ENCODE measurements at regions of chr4 and their contacts with region 1.

Region 1: GRCh38 chr4:152640058-152640833 is 39.6 kb downstream of the TMEM154 start:
- DNase-seq: no peak
- CTCF ChIP-seq: peak; percentile 40

Region 2: DNA sequence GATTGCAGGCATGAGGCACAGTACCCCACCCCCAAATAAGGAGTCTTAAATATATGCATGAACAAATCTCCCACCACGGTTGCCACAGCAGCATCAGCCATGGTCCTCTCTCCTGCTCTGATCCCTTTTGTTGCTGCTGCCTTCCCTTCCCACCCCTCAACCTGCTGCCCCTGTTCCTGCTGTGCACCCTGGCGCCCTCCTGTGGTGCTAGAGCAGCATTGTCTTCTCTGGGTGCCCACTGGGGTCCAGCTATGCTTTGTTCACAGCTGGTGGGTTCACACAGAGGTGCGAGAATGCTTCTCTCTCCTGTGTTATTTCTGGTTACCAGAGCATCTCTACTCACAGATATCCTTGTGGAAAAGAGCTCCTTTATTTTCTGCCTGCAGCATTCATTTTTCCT is 995.6 kb before region 1 on chr4:
- CTCF ChIA-PET with region 1: no interaction called
- POLR2A ChIA-PET with region 1: no interaction called
- DNase-seq: no peak
- CTCF ChIP-seq: no peak

Region 3: GRCh38 chr4:152454398-152455011 is 185.7 kb before region 1 on chr4:
- CTCF ChIA-PET with region 1: interaction called, 13 read pairs
- POLR2A ChIA-PET with region 1: no interaction called
- DNase-seq: peak; percentile 23
- CTCF ChIP-seq: peak; percentile 37

Region 4: GRCh38 chr4:152525873-152526272 is 114.4 kb before region 1 on chr4:
- CTCF ChIA-PET with region 1: interaction called, 13 read pairs
- POLR2A ChIA-PET with region 1: interaction called, 3 read pairs
- DNase-seq: no peak
- CTCF ChIP-seq: no peak

Region 5: DNA sequence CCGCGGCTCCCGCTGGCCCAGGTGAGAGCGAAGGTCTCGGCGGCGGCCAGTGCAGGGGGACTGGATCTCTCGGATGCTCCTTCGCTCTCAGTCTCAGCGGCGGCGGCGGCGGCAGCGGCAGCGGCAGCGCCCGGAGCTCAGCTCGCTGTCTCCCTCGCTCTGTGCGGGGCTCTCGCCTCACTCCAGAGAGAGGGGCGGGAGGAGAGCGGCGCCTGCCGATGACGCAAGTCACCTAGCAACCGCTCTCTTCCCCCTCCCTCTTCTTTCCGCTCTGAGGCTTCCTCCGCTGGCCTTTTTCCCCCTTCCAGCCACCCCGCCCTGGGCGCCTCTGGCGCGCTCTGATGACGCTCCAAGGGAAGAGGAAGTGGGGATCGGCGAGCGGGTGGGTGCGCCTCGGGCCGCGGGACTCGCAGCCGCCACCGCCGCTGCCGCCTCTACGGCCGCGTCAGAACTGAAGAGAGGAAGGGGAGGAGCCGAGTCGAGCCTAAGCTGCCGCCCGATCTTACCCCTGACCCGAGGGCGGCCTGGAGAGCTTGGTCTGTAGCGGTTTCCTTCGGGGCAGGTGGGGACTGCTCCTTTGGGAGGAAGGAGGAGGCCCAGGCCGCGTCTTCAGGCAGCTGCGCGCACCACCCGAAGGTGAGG is 104.2 kb before region 1 on chr4 and contains the start of gene FBXW7:
- CTCF ChIA-PET with region 1: interaction called, 14 read pairs
- POLR2A ChIA-PET with region 1: no interaction called
- DNase-seq: peak; percentile 96
- CTCF ChIP-seq: no peak

Region 6: DNA sequence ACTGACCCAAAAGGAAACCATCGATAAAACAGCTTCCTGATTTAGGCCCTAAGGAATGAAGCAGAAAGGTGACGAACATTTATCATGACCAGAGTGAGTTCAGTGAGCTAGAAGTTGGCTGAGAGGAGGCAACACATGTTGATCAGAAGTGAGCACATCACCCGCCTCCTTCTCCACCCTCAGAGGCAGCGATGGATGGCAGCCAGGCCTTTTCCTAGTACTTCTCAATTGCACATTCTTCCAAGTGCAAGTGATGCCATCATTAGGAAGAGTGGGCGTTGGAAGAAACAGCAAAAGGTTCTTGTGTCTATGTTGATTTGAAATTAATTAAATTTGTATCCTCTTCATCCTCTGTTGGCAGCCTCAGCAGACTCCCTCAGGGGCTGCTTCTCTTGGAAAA is 12.1 kb before region 1 on chr4:
- CTCF ChIA-PET with region 1: interaction called, 33 read pairs
- POLR2A ChIA-PET with region 1: no interaction called
- DNase-seq: no peak
- CTCF ChIP-seq: no peak

Region 7: DNA sequence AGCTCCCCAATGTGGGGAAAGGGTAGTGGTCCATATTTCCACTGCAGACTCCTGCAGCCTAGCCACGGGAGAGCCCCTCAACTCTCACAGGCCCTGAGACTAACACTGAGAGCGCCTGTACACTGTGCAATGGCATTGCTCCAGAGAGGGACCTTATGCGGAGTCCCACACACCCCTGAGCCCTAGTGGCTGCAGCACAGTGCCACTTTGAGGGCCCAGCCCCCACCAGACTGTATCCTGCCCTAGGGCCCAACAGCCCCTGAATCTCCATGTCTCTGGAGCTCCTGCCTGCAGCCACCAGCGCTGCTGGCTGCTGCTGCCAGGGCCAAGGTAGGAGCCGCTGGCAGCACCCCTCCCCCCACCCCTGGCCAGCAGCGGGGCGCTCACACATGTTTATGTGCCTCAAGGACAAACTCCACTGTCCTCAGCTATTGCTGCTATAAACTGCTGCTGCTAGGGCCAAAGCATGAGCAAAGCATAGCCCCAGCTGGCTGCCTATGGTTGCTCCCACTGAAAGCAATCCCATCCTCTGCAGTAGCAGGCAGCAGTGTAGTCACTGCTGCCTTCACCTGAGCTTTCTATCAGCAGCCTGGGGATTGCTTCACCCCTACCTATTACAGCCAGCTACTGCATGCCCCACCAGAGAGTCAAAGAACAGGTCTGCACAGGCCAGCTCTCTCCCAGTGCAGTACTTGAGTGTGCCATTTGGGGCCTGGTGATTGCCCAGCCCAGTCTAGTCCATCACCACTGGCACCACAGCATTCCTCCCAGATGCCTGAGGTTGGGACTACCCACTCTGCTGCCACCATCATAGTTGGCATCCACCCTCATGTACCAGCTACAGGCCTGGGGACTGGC is 15.3 kb after region 1 on chr4:
- CTCF ChIA-PET with region 1: interaction called, 21 read pairs
- POLR2A ChIA-PET with region 1: interaction called, 3 read pairs
- DNase-seq: no peak
- CTCF ChIP-seq: no peak

Region 8: GRCh38 chr4:152679414-152680281 is 39.4 kb after region 1 on chr4 and contains the start of gene TMEM154:
- CTCF ChIA-PET with region 1: interaction called, 13 read pairs
- POLR2A ChIA-PET with region 1: no interaction called
- DNase-seq: peak; percentile 67
- CTCF ChIP-seq: no peak